Naive thymus-derived CD8-positive, alpha-beta T cell (primary cell): ENCODE measurements at regions of chr1 and their contacts with region 1.

Region 1: DNA sequence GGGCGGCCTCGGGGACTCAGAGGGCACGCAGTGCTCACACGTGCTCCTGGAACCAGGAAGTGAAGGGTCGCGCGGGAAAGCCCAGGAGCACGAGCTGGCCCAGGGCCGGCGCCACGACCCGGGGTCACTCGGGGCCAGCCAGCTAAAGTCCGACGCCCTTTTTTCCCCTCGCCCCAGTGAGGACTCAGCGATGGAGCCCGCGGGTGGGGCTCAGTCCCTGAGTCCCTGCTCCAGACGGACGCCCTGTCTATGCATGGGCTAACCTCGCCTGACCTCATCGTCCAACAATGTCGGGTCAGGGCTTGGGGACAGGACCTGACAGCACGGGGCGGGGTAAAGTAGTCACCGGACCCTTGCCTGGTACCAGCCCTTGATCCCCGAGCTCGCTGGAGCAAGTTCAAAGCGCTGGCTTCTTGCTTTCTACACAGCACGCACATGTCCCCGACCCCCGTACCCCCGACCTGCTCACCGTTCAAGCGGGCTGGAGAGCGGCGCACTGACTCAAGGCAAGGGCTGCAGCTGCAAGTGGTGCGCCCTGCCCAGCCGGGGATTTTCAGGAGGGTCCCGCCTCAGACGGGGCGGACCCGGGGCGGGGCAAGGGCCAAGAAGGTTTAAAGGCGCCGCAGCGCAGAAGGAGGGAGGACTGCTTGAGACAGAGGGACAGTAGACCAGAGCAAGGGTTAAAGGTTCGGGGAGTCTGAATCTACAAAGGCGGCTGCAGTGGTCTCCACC is at the start of gene TAGLN2:
- DNase-seq: peak; percentile 83 to 94 (median 86)
- ATAC-seq: peak; percentile 49 to 52
- H3K4me3 Mint-ChIP-seq: peak within 1 kb of the TSS; percentile 85 to 100 (median 96)
- H3K27ac Mint-ChIP-seq: peak within 1 kb of the TSS; percentile 98 to 100 (median 100)
- H3K4me1 Mint-ChIP-seq: peaks cover 42 to 63% (median 51%) of the 10 kb centered on the region in 4 donors
- H3K27me3 Mint-ChIP-seq: peaks cover 0 to 5% (median 0%) of the 10 kb centered on the region in 5 donors
- polyA plus RNA-seq, gene TAGLN2: 477 to 825 (median 609) TPM

Region 2: GRCh38 chr1:159891275-159892157 is 33.6 kb before region 1 on chr1:
- POLR2A ChIA-PET with region 1: interaction called, 18 read pairs
- DNase-seq: peak; percentile 58 to 88 (median 74)
- ATAC-seq: peak; percentile 98 to 99
- H3K4me3 Mint-ChIP-seq: no peak overlapping the region
- H3K27ac Mint-ChIP-seq: peak overlapping the region in 5 of 10 donors; percentile 7 to 76 (median 50)
- H3K4me1 Mint-ChIP-seq: peaks cover 0 to 24% (median 16%) of the 10 kb centered on the region in 4 donors
- H3K27me3 Mint-ChIP-seq: no peaks in the 10 kb centered on the region

Region 3: DNA sequence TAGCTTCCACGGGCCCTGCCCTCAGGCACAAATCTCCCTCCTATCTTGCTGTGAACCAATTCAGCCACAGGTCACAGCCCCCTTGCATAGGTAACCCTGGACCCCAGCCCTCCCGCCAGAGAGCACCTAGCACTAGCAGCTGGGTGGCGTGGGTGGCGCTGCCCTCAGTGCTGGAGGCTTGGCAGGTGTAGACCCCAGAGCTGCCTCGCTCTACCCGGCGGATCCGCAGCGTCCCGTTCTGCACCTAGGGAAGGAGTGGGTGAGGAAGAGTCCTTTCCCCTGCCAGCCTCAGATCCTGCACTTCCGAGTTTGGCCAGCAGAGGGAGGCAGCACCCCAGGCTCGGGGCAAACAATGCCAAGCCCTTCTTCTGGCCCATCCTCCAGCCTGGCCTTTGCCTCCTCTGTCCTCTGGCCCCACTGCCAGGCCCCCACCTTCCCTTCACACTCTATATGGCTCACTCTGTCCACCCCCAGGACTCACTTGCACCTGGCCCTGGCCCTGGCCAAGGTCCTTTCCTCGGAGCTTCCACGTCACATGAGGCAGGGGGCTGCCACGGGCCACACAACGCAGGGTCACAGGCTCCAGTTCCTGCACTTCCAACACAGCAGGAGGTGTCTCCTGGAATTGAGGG is 11.2 kb after region 1 on chr1:
- POLR2A ChIA-PET with region 1: interaction called, 22 read pairs
- DNase-seq: peak; percentile 60 to 88 (median 76)
- ATAC-seq: peak; percentile 80 to 97
- H3K4me3 Mint-ChIP-seq: peak overlapping the region in 1 of 10 donors; percentile 33
- H3K27ac Mint-ChIP-seq: peak overlapping the region in 2 of 10 donors; percentile 59 to 86
- H3K4me1 Mint-ChIP-seq: peaks cover 5 to 36% (median 7%) of the 10 kb centered on the region in 4 donors
- H3K27me3 Mint-ChIP-seq: peaks cover 0 to 24% (median 5%) of the 10 kb centered on the region in 5 donors

Region 4: GRCh38 chr1:160031365-160032164 is 106.4 kb after region 1 on chr1 and contains the start of gene PIGM:
- POLR2A ChIA-PET with region 1: interaction called, 14 read pairs
- DNase-seq: peak; percentile 85 to 95 (median 88)
- ATAC-seq: peak; percentile 96 to 97
- H3K4me3 Mint-ChIP-seq: peak within 1 kb of the TSS; percentile 90 to 99 (median 97)
- H3K27ac Mint-ChIP-seq: peak within 1 kb of the TSS; percentile 89 to 97 (median 95)
- H3K4me1 Mint-ChIP-seq: peaks cover 19 to 43% (median 36%) of the 10 kb centered on the region in 4 donors
- H3K27me3 Mint-ChIP-seq: peaks cover 0 to 2% (median 0%) of the 10 kb centered on the region in 5 donors
- polyA plus RNA-seq, gene PIGM: 3.3 to 4.0 (median 3.8) TPM

Region 5: GRCh38 chr1:160284782-160285344 is 359.7 kb after region 1 on chr1 and contains the start of gene PEX19:
- POLR2A ChIA-PET with region 1: interaction called, 10 read pairs
- DNase-seq: peak; percentile 86 to 96 (median 92)
- ATAC-seq: peak; percentile 99 to 100
- H3K4me3 Mint-ChIP-seq: peak within 1 kb of the TSS; percentile 92 to 100 (median 98)
- H3K27ac Mint-ChIP-seq: peak within 1 kb of the TSS; percentile 91 to 98 (median 95)
- H3K4me1 Mint-ChIP-seq: peaks cover 17 to 34% (median 29%) of the 10 kb centered on the region in 4 donors
- H3K27me3 Mint-ChIP-seq: peaks cover 0 to 1% (median 0%) of the 10 kb centered on the region in 5 donors
- polyA plus RNA-seq, gene PEX19: 49.7 to 56.2 (median 53.1) TPM